ENCODE measurements at regions of chr7 and their contacts with region 1.

Region 1: DNA sequence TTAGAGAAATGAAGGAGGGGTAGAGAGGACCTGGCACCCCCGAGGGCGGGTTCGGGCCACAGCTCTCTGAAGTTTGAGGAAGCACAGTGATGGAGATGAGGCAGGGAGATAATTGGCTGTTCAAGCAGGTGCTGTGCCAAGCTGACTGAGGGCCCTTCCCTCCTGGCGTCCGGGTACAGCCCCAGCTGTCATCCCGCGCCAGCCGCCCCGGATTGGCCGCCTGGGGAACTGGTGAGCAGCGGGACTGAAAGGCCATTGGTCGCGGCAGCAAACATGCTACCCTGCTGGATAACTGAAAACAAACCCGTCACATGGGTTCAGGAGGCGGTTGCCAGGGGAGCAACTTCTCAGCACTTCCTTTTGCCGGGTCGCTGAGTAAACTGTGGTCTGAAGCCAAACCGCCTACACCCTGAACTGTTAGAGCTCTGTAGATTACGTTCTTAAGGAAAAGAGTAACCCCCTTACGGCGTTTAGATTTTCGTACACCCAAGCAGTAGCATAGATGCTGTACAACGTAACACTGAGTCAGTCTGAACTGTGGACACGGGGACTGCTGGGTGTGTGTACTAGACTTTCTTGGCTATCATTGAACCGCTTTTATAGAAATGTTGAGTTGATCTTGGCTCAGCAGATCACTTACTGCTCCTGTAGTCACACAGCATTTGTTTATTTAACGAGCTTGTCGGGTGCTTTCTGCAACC is 1.3 kb downstream of the INSIG1 start:
- DNase-seq: peak; percentile 97
- H3K4me3 ChIP-seq: peak overlapping the region; percentile 53 to 89 (median 68)
- H3K4me3 Mint-ChIP-seq: peak overlapping the region; percentile 90 to 93
- H3K27ac ChIP-seq: peak overlapping the region; percentile 84 to 89
- H3K27ac Mint-ChIP-seq: peak overlapping the region; percentile 95 to 98 (median 97)
- H3K4me1 ChIP-seq: peaks cover 35 to 43% of the 10 kb centered on the region in 2 donors
- H3K4me1 Mint-ChIP-seq: peaks cover 46% of the 10 kb centered on the region
- H3K27me3 ChIP-seq: no peaks in the 10 kb centered on the region
- H3K27me3 Mint-ChIP-seq: peaks cover 0 to 5% (median 2%) of the 10 kb centered on the region in 3 donors
- CTCF ChIP-seq: no peak

Region 2: DNA sequence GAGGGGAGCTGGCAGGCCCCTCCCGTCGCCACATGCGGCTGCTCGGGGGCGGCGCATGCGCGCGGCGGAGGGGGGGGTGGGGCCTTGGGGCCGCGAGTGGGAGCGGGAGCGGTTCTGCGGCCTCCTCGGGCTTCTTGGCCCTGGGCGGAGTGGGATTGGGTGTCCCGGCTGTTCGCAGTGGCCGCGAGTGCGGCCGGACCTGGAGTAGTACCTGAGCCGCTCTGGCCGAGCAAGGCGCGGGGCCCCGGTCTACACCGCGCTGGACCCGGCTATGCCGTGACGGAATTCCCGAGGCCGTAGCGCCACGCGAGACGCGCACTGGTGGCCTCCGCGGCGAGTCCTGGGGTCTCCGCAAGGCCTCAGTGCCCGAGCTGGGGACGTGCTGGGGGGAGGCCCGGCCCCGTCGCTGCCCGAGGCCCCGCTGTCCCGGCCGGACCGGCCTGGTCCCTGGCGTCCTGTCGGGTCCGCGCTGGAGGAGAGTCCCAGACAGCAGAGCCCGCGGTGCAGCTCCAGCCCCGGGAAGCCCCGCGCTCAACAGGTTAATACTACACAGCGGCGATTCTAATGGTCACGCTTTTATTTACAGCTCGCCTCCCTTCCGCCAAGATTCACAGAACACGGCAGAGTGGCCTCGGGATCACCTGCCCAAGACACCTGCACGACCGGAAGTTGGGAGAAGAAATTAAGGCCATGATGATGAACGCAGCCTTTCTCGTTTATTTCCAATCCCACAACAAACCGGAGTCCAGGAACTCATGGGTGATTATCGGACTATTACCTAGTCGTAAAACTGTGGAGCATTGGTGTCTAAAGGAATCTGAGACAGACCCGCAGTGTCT is 295.4 kb before region 1 on chr7:
- intact Hi-C with region 1: loop called in 1 of 2 experiments (anchors 5 kb)
- DNase-seq: peak; percentile 73 to 79 (median 78)
- H3K4me3 ChIP-seq: peak overlapping the region; percentile 68 to 92 (median 74)
- H3K4me3 Mint-ChIP-seq: peak overlapping the region; percentile 89 to 95
- H3K27ac ChIP-seq: peak overlapping the region in 1 of 2 donors; percentile 83
- H3K27ac Mint-ChIP-seq: peak overlapping the region; percentile 15 to 84 (median 63)
- H3K4me1 ChIP-seq: peaks cover 16 to 18% of the 10 kb centered on the region in 2 donors
- H3K4me1 Mint-ChIP-seq: peaks cover 19% of the 10 kb centered on the region
- H3K27me3 ChIP-seq: no peaks in the 10 kb centered on the region
- H3K27me3 Mint-ChIP-seq: peaks cover 0 to 2% (median 1%) of the 10 kb centered on the region in 3 donors
- CTCF ChIP-seq: no peak

Region 3: GRCh38 chr7:155205368-155206317 is 93.3 kb before region 1 on chr7:
- intact Hi-C with region 1: loop called (anchors 1 to 5 kb)
- DNase-seq: peak; percentile 97 to 100 (median 98)
- H3K4me3 ChIP-seq: peak overlapping the region; percentile 30 to 64 (median 31)
- H3K4me3 Mint-ChIP-seq: peak overlapping the region; percentile 74 to 94
- H3K27ac ChIP-seq: peak overlapping the region; percentile 86 to 100
- H3K27ac Mint-ChIP-seq: peak overlapping the region; percentile 100
- H3K4me1 ChIP-seq: peaks cover 22 to 23% of the 10 kb centered on the region in 2 donors
- H3K4me1 Mint-ChIP-seq: peaks cover 22% of the 10 kb centered on the region
- H3K27me3 ChIP-seq: no peaks in the 10 kb centered on the region
- H3K27me3 Mint-ChIP-seq: peaks cover 0 to 9% (median 0%) of the 10 kb centered on the region in 3 donors
- CTCF ChIP-seq: no peak

Region 4: DNA sequence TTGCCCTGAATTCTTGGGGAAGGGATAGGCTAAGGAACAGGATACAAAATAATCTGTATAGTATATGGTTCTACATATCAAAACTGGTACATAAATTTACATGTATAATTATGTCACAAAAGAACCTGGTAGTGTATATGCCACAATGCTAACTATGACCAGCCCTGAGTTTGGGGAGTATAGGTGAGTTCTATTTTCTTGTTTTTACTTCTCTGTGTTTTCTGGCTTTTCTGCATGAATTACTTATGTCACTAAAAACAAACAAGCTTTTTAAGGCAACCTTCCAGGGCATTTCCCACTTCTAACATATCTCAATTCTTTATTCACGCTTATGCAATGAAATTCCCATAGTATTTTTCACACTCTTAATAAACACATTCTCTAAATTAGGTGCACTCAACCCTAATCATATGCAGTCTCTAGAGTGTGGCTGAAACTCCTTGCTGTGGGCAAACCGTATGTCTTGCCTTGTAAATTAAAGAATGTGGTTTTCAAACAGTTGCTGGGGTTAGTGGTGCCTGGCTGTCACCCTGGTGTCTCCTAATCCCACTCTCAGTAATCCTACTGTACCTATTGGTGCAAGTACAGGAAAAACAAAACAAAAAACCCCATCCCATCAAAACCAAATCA is 15.3 kb before region 1 on chr7:
- intact Hi-C with region 1: loop called in 1 of 2 experiments (anchors 2 kb)
- DNase-seq: no peak
- H3K4me3 ChIP-seq: no peak overlapping the region
- H3K4me3 Mint-ChIP-seq: no peak overlapping the region
- H3K27ac ChIP-seq: no peak overlapping the region
- H3K27ac Mint-ChIP-seq: peak overlapping the region in 4 of 7 donors; percentile 30 to 85 (median 66)
- H3K4me1 ChIP-seq: peaks cover 30 to 32% of the 10 kb centered on the region in 2 donors
- H3K4me1 Mint-ChIP-seq: peaks cover 53% of the 10 kb centered on the region
- H3K27me3 ChIP-seq: no peaks in the 10 kb centered on the region
- H3K27me3 Mint-ChIP-seq: peaks cover 6 to 13% (median 11%) of the 10 kb centered on the region in 3 donors
- CTCF ChIP-seq: no peak

Region 5: DNA sequence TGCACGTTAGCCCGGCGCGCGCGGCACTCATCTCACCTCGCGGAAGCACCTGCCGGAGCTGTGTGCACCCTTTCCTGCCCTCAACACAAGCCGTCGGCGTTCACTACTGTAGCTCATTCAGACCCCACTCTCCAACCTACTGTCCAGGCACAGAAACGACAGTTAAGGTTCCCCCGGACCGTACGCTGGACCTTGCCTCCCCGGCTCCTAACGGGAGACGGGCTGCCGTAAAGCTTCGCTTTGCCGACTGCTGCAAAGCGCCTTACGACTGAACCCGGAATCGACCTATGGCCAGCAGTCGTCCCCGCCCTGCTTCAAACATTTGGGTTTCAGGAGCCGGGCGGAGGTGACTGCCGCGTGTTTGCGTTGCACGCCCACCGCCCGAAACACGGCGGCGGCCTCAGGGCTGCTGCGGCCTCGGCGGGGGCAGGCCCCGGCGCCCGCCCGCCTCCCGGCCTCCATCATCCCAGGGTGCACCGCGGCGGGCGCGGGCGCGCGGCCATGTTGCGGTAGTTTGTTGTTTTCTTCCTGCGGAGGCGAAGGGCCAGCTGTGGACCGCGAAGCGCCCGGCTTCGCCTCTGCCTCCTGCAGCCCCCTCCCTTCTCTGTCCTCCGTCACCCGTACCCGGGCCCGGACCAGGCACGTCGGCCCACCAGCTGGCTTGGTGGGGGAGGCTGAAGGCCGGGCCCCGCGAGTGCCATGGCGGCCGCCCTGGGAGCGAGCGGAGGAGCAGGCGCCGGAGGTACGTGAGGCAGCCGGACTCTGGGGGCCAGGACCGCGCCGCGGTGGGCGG is 345.4 kb after region 1 on chr7 and contains the start of gene RBM33:
- intact Hi-C with region 1: loop called in 1 of 2 experiments (anchors 5 kb)
- DNase-seq: peak; percentile 64 to 66 (median 66)
- H3K4me3 ChIP-seq: peak within 1 kb of the TSS; percentile 85 to 97 (median 94)
- H3K4me3 Mint-ChIP-seq: peak within 1 kb of the TSS; percentile 98 to 99
- H3K27ac ChIP-seq: peak within 1 kb of the TSS; percentile 77 to 98
- H3K27ac Mint-ChIP-seq: peak within 1 kb of the TSS; percentile 90 to 100 (median 98)
- H3K4me1 ChIP-seq: peaks cover 15 to 25% of the 10 kb centered on the region in 2 donors
- H3K4me1 Mint-ChIP-seq: peaks cover 26% of the 10 kb centered on the region
- H3K27me3 ChIP-seq: no peaks in the 10 kb centered on the region
- H3K27me3 Mint-ChIP-seq: no peaks in the 10 kb centered on the region
- CTCF ChIP-seq: no peak
- polyA plus RNA-seq, gene RBM33: 15.0 to 27.7 (median 22.2) TPM

Region 6: DNA sequence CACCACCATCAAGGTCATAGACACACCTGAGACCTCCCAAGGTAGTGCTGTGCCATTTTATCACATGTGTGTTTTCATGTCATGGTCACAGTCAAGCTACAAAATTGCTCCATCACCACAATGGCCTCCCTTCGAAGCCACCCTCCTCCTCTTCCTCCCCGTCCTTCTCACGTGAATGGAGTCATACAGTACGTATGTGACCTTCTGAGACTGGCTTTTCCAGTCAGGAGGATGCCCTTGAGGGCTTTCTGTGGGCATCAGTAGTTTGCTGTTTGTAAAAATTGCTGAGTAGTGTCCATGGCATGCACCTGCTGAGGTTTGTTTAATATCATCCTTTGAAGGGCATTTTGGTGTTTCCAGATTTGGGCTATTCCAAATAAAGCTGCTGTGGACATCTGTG is 1833.8 kb after region 1 on chr7:
- intact Hi-C with region 1: loop called in 1 of 2 experiments (anchors 5 kb)
- DNase-seq: no peak
- H3K4me3 ChIP-seq: no peak overlapping the region
- H3K4me3 Mint-ChIP-seq: no peak overlapping the region
- H3K27ac ChIP-seq: no peak overlapping the region
- H3K27ac Mint-ChIP-seq: no peak overlapping the region
- H3K4me1 ChIP-seq: peaks cover 17% of the 10 kb centered on the region in 2 donors
- H3K4me1 Mint-ChIP-seq: peaks cover 12% of the 10 kb centered on the region
- H3K27me3 ChIP-seq: peaks cover 0 to 2% of the 10 kb centered on the region in 2 donors
- H3K27me3 Mint-ChIP-seq: peaks cover 1 to 20% (median 17%) of the 10 kb centered on the region in 3 donors
- CTCF ChIP-seq: no peak